ENCODE measurements at regions of chr1 and their contacts with region 1.

Region 1: GRCh38 chr1:100277866-100278265 is 11.8 kb downstream of the RTCA start:
- DNase-seq: no peak
- H3K4me3 ChIP-seq: no peak overlapping the region
- H3K27ac ChIP-seq: no peak overlapping the region
- H3K4me1 ChIP-seq: no peaks in the 10 kb centered on the region
- H3K27me3 ChIP-seq: no peaks in the 10 kb centered on the region
- CTCF ChIP-seq: no peak
- EP300 ChIP-seq: no peak
- POLR2A ChIP-seq: no peak

Region 2: GRCh38 chr1:100469578-100469977 is 191.7 kb after region 1 on chr1:
- in situ Hi-C with region 1: loop called in 2 of 4 experiments (anchors 25 kb)
- intact Hi-C with region 1: loop called (anchors 5 kb)
- DNase-seq: no peak
- H3K4me3 ChIP-seq: no peak overlapping the region
- H3K27ac ChIP-seq: no peak overlapping the region
- H3K4me1 ChIP-seq: no peaks in the 10 kb centered on the region
- H3K27me3 ChIP-seq: no peaks in the 10 kb centered on the region
- CTCF ChIP-seq: no peak
- EP300 ChIP-seq: no peak
- POLR2A ChIP-seq: no peak

Region 3: DNA sequence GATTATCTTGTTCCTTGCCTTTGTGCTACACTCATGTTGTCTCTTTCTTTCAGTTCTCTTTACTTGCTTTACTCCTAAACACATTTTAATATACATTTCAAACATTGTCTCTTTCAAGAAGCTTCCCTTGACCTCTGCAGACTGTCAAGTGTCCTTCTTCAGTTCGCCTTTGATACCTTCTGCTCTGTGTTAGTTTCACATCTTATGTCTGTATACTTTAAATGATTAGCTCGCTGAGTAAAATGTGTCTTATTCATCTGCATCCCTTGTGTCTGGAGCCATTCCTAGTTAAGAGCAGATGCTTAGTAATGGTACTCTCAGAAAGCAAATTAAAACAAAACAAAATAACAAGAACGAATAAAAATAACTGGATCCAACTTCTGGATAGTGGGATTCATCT is 1262.3 kb after region 1 on chr1:
- in situ Hi-C with region 1: no loop called
- intact Hi-C with region 1: no loop called
- DNase-seq: no peak
- H3K4me3 ChIP-seq: no peak overlapping the region
- H3K27ac ChIP-seq: no peak overlapping the region
- H3K4me1 ChIP-seq: no peaks in the 10 kb centered on the region
- H3K27me3 ChIP-seq: peaks cover 6% of the 10 kb centered on the region
- CTCF ChIP-seq: no peak
- EP300 ChIP-seq: no peak
- POLR2A ChIP-seq: no peak